GM10248 (cell line): ENCODE measurements at regions of chr18 and their contacts with region 1.

Region 1: DNA sequence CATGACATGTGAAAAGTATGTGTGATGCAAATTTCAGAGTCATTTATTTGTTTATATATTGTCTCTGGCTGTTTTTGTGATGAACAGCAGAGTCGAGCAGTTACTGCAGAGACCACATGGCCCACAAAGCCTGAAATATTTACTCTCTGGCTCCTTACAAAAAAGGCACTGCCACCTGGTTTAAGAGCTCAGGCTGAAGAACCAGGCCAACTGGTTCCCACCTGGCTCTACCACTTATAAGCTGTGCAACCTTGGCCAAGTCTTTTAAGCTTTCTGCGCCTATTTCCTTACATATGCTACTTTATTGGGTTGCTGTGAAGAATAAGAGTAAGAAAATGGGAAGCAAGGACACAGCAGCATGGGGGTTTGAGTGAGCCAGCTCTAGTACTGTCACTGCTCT is 207.6 kb downstream of the L3MBTL4 start:
- DNase-seq: no peak
- CTCF ChIP-seq: no peak

Region 2: DNA sequence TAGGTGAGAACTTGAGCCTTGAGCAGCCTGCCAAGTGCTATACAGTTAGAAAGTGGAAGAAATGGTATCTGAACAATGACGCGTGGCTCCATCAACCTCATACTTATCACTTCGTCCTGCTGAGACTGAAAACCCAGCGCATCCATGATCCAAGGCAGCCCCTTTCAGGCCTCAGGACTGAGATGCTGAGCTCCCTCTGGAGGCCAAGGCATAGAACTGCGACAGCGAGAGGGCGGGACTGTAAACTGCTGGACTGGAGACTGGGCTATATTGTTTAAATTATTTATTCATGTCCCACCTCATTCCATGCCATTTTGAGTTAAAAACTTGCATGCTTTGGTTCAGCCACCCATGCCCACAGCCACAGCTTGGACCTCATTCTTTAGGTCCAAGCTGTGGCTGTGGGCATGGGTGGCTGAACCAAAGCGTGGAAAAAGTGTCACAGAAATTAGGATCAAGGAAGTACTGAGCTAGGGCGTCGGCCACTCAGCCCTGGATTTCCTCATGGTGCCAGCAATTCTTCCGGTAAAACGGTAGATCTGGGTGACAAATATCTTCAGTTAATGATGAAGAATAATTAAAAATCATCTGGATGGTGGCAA is 12.1 kb after region 1 on chr18:
- CTCF ChIA-PET with region 1: interaction called, 23 read pairs
- POLR2A ChIA-PET with region 1: no interaction called
- DNase-seq: peak; percentile 42
- CTCF ChIP-seq: peak; percentile 63

Region 3: GRCh38 chr18:6561420-6561861 is 354.3 kb after region 1 on chr18:
- CTCF ChIA-PET with region 1: no interaction called
- POLR2A ChIA-PET with region 1: no interaction called
- DNase-seq: no peak
- CTCF ChIP-seq: no peak